ENCODE measurements at regions of chrX and their contacts with region 1.

Region 1: GRCh38 chrX:17689971-17690409 is 47.3 kb upstream of the SCML1 start:
- H3K4me3 ChIP-seq: no peak overlapping the region
- H3K27ac ChIP-seq: no peak overlapping the region
- H3K4me1 ChIP-seq: peaks cover 7% of the 10 kb centered on the region
- CTCF ChIP-seq: peak; percentile 49; the same call in 1 of the 2 replicates

Region 2: GRCh38 chrX:17242470-17242869 is 447.5 kb before region 1 on chrX:
- CTCF ChIA-PET with region 1: interaction called, 12 read pairs
- POLR2A ChIA-PET with region 1: no interaction called
- H3K4me3 ChIP-seq: no peak overlapping the region
- H3K27ac ChIP-seq: no peak overlapping the region
- H3K4me1 ChIP-seq: no peaks in the 10 kb centered on the region
- CTCF ChIP-seq: 0 out of 2 replicates have a peak, but pooled peaks have one; percentile 10

Region 3: GRCh38 chrX:17535229-17535628 is 154.8 kb before region 1 on chrX:
- CTCF ChIA-PET with region 1: interaction called, 11 read pairs
- POLR2A ChIA-PET with region 1: no interaction called
- H3K4me3 ChIP-seq: no peak overlapping the region
- H3K27ac ChIP-seq: no peak overlapping the region
- H3K4me1 ChIP-seq: no peaks in the 10 kb centered on the region
- CTCF ChIP-seq: no peak

Region 4: DNA sequence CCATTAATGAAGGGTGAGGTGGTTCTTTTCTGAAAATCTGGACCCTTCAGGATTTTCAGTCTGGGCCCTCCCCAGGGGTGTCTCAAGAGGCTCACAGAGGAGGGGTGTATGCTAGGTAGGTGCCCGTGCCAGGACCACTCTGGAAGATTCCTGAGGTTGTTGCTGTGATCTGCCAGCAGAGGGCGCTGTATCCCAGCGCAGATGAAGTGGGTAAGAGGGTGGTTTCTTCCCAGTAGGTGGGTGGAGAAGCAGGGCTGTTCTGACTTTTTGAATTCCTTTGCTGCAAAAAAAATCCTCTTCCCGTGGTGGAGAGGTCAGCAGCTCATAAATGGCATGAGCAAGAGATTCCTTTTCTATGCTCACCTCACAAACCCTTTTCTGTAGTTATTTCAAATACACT is 98.4 kb after region 1 on chrX:
- CTCF ChIA-PET with region 1: no interaction called
- POLR2A ChIA-PET with region 1: no interaction called
- H3K4me3 ChIP-seq: no peak overlapping the region
- H3K27ac ChIP-seq: no peak overlapping the region
- H3K4me1 ChIP-seq: no peaks in the 10 kb centered on the region
- CTCF ChIP-seq: peak; percentile 63